ENCODE measurements at regions of chr7 and their contacts with region 1.

Region 1: GRCh38 chr7:909358-910329 is 33.3 kb downstream of the GET4 start:
- DNase-seq: no peak
- H3K4me3 ChIP-seq: peak overlapping the region in 2 of 3 experiments; percentile 7 to 20
- H3K27ac ChIP-seq: no peak overlapping the region
- H3K4me1 ChIP-seq: peaks cover 14% of the 10 kb centered on the region
- H3K27me3 ChIP-seq: no peaks in the 10 kb centered on the region
- CTCF ChIP-seq: no peak

Region 2: GRCh38 chr7:883055-884021 is 26.3 kb before region 1 on chr7:
- CTCF ChIA-PET with region 1: no interaction called
- dilution Hi-C with region 1: no loop called
- in situ Hi-C with region 1: no loop called
- intact Hi-C with region 1: no loop called
- DNase-seq: no peak
- H3K4me3 ChIP-seq: no peak overlapping the region
- H3K27ac ChIP-seq: no peak overlapping the region
- H3K4me1 ChIP-seq: peaks cover under 1% of the 10 kb centered on the region
- H3K27me3 ChIP-seq: no peaks in the 10 kb centered on the region
- CTCF ChIP-seq: no peak

Region 3: DNA sequence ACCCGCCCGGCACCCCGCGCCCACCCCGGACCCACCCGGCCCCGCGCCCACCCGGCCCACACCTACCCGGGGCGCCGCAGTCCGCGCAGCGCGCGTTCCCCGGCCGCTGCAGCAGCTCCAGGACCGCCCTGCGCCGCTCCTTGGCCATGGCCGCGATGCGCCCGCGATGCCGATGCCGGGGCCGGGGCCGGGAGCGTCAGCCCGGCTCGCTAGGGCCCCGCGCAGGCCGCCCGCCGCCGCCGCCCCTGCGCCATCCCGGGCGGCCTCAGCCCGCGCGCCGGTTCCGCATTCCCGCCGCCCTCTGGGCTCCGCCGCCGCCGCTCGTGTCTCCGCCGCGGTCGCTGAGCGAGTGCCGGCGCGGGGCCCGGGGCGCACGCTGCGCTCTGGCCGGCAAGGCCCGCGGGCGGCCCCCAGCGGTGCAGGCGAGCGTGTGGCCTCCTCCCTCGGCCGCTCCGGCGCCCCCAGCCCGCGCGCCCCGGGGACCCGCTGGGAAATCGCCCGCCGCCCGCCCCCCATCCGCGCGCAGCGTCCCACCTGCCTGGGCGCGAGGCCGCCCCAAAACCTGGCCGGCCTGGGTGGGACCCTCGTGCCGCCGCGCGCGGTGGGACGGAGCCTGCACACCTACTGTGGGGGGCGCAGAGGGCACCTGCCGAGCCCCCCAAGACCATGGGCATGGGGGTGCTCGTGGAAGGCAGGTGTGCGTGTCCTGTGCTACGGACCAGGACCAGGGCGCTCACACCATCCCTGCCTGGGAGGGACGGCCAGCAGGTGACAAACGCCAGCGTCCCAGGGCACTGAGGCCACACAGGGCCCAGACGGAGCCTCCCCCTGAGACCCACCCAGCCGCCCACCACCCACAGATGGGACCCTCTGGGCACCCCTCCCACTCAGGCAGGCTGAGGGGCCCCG is 44.9 kb after region 1 on chr7 and contains the start of gene ADAP1:
- CTCF ChIA-PET with region 1: no interaction called
- dilution Hi-C with region 1: no loop called
- in situ Hi-C with region 1: no loop called
- intact Hi-C with region 1: loop called (anchors 1 kb)
- DNase-seq: peak; percentile 41
- H3K4me3 ChIP-seq: peak within 1 kb of the TSS; percentile 59 to 68 (median 66)
- H3K27ac ChIP-seq: no peak within 1 kb of the TSS
- H3K4me1 ChIP-seq: peaks cover 14% of the 10 kb centered on the region
- H3K27me3 ChIP-seq: no peaks in the 10 kb centered on the region
- CTCF ChIP-seq: peak in 1 of 2 donors; percentile 41
- total RNA-seq, gene ADAP1: 11.0 to 21.4 TPM

Region 4: DNA sequence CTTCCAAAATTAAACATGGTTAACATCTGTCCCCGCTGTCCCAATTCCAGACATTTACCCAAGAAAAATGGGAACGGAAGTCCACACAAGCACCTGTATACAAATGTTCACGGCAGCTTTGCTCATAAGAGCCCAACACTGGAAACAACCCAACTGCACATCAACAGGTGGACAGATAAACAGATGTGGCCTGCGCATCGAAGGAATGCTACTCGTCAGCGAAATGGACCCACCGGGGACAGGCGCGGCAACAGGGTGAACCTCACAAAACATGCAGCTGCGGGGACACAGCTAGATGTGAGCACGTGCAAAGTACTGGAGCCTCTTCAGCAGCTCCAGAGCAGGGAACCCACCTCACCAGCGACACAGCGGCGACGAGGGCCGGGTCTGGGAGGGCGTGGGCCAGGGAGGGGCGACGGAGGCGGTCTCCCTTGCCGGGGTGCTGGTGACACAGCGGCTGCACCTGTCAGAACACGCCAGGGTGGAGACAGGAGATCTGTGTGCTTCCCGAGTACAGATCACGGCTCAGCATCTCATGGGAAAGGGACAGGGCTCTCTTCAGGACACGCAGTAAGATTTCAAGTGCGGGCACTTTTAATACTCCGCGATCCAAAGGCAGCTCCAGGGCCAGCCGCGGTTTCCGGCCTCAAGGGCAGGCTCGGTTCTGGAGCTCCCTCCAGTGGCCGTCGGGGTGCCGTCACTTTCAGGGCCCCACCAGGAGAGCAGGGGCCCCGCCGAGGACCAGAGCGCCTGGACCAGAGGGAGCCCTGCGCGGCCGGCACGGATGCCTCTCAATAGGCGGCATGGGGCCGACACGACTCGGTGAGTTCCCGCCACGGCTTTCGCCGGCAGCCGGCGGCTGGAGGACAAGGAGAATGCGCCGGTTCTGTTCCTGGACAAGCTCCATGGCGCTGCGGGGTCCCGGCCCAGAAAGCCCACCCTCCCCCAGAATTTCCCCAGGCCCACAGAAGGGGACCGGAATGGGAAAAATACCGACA is 155.9 kb after region 1 on chr7:
- CTCF ChIA-PET with region 1: no interaction called
- dilution Hi-C with region 1: no loop called
- in situ Hi-C with region 1: no loop called
- intact Hi-C with region 1: loop called (anchors 1 kb)
- DNase-seq: peak; percentile 44
- H3K4me3 ChIP-seq: peak overlapping the region in 1 of 3 experiments; percentile 21
- H3K27ac ChIP-seq: no peak overlapping the region
- H3K4me1 ChIP-seq: peaks cover 14% of the 10 kb centered on the region
- H3K27me3 ChIP-seq: no peaks in the 10 kb centered on the region
- CTCF ChIP-seq: peak; percentile 59 to 90

Region 5: DNA sequence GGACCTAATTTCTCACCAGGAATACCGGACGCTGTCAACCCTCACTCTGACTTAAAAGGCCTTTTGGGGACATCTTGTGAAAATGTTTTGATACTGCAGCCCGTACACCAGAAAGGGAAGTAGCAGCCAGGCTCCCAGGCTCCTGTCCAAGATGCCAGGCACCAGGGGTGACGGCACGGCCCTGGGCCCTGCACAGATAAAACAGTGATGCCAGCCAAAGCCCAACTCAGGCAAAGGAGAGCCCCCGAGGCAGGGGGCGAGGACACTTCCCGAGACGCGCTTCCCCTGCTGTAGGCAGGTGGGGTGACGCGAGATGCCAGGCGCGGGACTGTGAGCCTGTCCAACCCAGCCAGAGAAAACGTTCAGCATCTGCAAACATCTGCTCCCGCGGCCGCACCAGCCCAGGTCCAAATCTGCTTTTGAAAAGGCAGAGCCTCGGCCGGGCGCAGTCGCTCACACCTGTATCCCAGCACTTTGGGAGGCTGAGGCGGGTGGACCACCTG is 234.7 kb after region 1 on chr7:
- CTCF ChIA-PET with region 1: no interaction called
- dilution Hi-C with region 1: no loop called
- in situ Hi-C with region 1: no loop called
- intact Hi-C with region 1: loop called (anchors 5 kb)
- DNase-seq: peak; percentile 39
- H3K4me3 ChIP-seq: no peak overlapping the region
- H3K27ac ChIP-seq: no peak overlapping the region
- H3K4me1 ChIP-seq: no peaks in the 10 kb centered on the region
- H3K27me3 ChIP-seq: no peaks in the 10 kb centered on the region
- CTCF ChIP-seq: peak; percentile 39 to 48